Activated T-helper 1 cell treated with anti-CD3 and anti-CD28 coated beads, Interleukin-12 subunit alpha, Interleukin-12 subunit beta, Interleukin-2, Interleukin-4 antibody, amounts not matched to agents 30 ng/mL and 10 ng/mL and 1 ng/mL, durations not matched to agents 14 hours and 24 hours and 36 hours (primary cell): ENCODE measurements at regions of chr11 and their contacts with region 1.

Region 1: DNA sequence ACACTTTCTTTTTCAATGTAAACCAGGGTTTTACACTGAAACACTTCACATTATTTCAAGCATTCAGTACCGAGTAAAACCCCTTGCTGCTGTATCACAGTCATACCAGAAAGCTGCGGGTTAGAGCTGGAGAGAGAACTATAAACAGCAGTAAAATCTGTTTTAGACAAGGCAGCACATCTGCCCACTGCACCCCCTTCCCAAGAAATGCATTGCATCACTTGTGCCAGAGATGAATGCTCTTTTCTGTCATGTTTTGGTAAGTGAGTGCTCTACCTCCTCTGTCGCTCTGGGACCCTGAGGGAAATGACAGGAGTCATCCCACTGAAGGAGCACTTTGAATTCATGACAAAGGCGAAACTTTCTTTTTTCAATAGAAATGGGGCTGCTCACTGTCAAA is 107.2 kb downstream of the MAML2 start:
- DNase-seq: peak; percentile 56
- H3K4me3 Mint-ChIP-seq: peak overlapping the region; percentile 74
- H3K27ac Mint-ChIP-seq: peak overlapping the region; percentile 93
- H3K4me1 Mint-ChIP-seq: peaks cover 13% of the 10 kb centered on the region
- H3K27me3 Mint-ChIP-seq: no peaks in the 10 kb centered on the region

Region 2: GRCh38 chr11:96054870-96055705 is 180.7 kb before region 1 on chr11:
- intact Hi-C with region 1: loop called (anchors 2 kb)
- DNase-seq: no peak
- H3K4me3 Mint-ChIP-seq: no peak overlapping the region
- H3K27ac Mint-ChIP-seq: no peak overlapping the region
- H3K4me1 Mint-ChIP-seq: peaks cover 60% of the 10 kb centered on the region
- H3K27me3 Mint-ChIP-seq: no peaks in the 10 kb centered on the region

Region 3: DNA sequence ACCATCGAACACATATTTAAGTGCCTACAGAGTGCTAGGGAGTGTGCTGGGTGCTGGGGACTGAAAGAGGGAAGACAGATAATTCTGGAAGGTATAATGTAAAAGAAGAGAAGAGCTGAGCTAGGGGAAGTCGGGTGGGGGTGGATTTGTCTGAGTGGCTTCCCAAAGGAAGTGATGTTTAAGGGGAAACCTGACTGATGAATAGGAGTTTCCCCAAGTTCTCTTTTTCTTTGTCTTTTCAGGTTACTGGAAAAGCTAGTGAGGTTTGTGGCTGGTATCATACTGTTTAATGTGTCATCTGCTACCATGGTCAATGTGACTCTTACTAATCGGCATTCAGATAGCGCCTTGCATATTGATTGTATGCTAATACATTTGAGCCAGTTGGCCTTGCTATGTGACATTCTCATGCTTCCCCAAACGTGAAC is 160.2 kb before region 1 on chr11:
- intact Hi-C with region 1: loop called (anchors 5 kb)
- DNase-seq: no peak
- H3K4me3 Mint-ChIP-seq: peak overlapping the region; percentile 15
- H3K27ac Mint-ChIP-seq: peak overlapping the region; percentile 78
- H3K4me1 Mint-ChIP-seq: peaks cover 35% of the 10 kb centered on the region
- H3K27me3 Mint-ChIP-seq: no peaks in the 10 kb centered on the region

Region 4: GRCh38 chr11:96155627-96156378 is 79.9 kb before region 1 on chr11:
- intact Hi-C with region 1: loop called (anchors 1 kb)
- DNase-seq: peak; percentile 41
- H3K4me3 Mint-ChIP-seq: peak overlapping the region; percentile 61
- H3K27ac Mint-ChIP-seq: peak overlapping the region; percentile 94
- H3K4me1 Mint-ChIP-seq: peaks cover 55% of the 10 kb centered on the region
- H3K27me3 Mint-ChIP-seq: no peaks in the 10 kb centered on the region

Region 5: DNA sequence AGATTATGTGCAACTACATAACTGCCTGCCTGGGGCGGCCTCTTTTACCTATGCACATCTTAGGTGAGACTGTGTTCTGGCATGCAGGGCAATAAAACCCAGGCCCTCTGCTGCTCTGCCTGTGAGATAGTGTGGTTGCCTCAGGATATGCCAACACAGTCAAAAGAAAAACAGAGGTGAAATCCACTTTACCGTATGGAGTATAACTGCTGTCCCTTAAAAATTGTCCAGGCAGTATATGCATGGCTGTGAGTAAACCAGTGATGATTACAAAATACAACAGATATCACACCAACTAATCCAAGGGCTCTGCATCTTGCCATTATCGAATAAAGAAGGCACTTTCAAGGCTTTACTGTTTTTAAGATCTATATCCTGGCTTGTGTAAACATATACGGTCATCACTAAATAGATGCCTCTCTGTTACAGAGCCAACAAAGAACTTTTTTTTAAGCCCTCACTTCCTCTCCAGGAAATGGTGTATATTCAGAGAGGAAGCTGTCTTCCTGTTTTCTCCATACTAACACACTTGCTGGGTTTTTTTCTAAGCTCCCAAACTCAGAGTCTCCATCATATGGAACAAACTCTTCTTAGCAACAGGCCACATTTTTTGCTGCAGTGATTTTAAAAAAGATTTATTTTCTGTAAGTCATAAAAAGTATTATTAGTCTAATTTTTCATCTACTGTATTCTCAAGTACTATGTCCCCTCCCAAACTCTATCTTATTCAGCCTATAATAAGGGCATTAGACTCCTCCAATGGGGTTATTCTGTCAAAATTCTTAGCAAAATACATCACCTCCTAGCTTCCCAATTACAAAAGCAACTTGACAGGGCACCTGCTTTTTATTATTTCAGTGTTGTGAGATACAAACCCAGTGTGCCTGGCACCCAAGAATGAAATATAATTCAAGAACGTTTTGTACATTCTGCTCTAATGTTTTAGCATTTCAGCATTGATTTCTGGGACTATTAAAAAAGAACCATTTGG is 28.0 kb before region 1 on chr11:
- intact Hi-C with region 1: loop called (anchors 1 kb)
- DNase-seq: no peak
- H3K4me3 Mint-ChIP-seq: peak overlapping the region; percentile 72
- H3K27ac Mint-ChIP-seq: peak overlapping the region; percentile 95
- H3K4me1 Mint-ChIP-seq: peaks cover 83% of the 10 kb centered on the region
- H3K27me3 Mint-ChIP-seq: no peaks in the 10 kb centered on the region

Region 6: GRCh38 chr11:96215110-96215782 is 20.5 kb before region 1 on chr11:
- intact Hi-C with region 1: loop called (anchors 1 kb)
- DNase-seq: no peak
- H3K4me3 Mint-ChIP-seq: peak overlapping the region; percentile 68
- H3K27ac Mint-ChIP-seq: peak overlapping the region; percentile 95
- H3K4me1 Mint-ChIP-seq: peaks cover 67% of the 10 kb centered on the region
- H3K27me3 Mint-ChIP-seq: no peaks in the 10 kb centered on the region

Region 7: DNA sequence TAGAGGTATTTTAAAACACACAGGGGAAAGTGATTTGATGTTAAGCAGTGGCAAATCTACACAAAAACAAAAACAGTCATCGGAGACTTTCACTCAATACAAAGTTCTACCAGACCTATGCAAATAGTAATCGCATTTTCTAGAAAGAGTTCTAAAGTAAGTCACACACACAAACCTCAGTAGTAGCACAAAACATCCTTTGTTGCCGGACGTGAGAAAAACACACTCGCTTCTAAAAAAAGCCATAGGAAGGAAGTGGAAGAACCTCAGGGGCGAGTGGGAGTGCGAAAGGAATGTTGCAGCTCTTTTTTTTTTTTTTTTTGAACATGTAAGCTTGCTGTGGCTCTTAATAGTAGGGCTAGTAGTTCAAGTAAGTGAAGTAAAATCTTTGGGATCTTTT is 18.3 kb after region 1 on chr11:
- intact Hi-C with region 1: loop called (anchors 1 kb)
- DNase-seq: peak; percentile 30
- H3K4me3 Mint-ChIP-seq: peak overlapping the region; percentile 77
- H3K27ac Mint-ChIP-seq: peak overlapping the region; percentile 92
- H3K4me1 Mint-ChIP-seq: peaks cover 75% of the 10 kb centered on the region
- H3K27me3 Mint-ChIP-seq: no peaks in the 10 kb centered on the region